ENCODE measurements at regions of chr6 and their contacts with region 1.

Region 1: DNA sequence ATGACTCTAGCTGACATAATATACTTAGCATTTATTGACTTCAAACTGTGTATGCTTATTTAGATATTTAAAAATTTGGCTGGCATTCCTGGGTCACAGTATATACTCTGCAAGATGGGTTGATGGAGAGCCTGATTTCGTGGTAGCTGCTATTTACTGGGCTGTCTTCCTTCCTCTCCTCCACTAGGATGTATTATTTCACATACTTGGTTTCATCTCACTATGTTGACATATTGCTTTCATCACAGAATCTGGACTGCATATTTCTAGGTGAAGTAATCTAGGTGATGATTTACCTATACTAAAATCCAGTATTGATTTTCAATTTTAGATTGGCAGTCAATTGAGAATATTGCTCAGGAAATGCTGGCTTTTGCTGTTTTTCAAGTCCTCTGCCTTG is 15.7 kb downstream of the AFDN start:
- DNase-seq: no peak
- CTCF ChIP-seq: no peak

Region 2: DNA sequence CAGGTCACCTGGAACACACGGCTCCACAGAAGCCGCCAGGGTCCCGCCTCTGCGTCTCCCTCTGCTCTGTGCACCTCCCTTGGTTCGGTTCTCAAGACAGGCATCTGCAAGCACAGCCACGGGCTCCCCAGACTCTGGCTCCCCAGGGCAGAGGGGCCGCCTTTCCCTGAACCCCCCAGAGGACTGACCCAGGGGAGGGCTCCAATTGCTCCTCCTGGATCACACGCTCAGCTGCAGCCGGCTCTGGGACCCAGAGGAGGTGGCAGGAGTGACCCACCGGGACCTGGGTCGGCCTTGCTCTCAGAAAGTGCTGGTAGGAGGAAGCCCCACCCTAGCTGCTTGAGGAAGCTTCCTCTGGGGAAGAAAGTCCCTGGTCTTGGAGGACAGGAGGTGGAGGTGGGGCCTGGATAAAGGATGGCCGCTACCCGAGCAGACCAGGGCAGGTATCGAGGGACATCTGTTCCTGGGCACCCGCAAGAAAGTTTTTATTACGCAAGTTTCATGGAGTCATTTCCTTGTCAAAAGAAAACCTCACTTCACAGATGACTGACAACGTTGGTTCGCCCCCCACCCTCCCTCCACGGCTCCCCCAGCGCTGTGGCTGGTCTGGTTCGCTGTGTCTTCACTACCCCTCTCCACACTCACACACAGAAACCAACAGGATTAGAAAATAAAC is 119.7 kb before region 1 on chr6:
- CTCF ChIA-PET with region 1: no interaction called
- POLR2A ChIA-PET with region 1: no interaction called
- DNase-seq: no peak
- CTCF ChIP-seq: no peak

Region 3: DNA sequence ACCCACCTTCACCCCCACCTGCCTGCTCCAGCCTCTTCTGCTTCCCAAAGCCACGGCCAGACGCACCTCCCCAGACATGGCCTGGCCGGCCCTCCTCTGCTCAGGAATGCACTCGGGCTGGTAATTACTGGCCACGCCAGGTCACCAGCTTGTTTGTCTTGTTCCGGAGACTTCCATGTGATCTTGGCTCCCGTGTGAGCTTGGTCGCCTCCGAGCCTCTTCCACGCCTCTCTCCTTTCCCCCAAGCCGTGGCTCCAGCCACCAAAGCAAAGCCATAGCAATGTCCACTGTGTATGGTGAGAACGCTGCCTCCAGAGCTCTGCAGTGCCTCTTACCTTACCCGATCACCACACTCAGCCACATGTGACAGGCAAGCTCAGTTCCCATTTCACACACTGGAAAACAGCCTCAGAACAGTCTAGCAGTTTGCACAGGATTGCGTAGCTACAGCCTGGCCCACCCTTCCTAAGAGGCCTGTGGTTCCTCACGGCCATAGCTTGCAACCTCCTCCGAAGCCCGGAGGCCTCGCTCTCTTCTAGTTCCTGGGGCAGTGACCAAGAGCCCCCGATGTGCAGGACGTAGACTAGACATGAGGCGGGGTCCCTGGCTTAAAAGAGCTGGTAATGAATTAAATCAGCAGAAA is 63.8 kb before region 1 on chr6:
- CTCF ChIA-PET with region 1: no interaction called
- POLR2A ChIA-PET with region 1: no interaction called
- DNase-seq: no peak
- CTCF ChIP-seq: no peak

Region 4: DNA sequence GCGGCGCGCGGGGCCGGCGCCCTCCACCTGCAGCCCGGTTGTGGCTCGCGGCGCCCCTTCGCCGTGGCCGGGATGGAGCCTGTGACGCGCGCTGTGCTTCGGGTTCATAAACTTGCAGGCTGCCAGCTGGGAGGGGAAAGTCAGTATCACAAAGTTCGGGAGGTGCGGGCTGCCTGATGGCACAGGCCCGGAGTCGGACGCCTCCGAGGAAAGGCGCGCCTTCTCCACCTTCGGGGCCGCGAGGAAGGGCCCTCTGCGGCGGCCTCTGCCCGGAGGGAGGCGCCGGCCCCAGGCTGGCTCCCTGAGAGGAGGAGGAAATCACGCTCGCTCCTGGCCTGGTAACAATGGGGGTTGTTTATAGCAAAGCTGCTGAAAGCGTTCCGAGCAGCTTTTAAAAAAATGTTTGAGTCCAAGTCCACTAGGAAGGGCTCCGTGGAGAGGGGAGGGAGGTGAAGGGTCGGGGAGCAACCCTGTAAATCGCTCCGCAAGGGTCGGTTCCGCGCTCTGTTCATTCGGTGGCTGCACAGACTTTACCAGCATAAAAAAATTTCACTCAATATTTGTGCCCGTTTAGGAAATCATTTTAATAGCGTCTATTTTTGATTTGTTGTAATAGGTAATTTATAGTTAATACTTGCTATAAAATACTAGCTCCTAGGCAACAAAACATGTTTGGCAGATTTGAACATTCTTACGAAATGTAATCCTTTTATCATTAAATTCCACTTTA is 14.7 kb before region 1 on chr6:
- CTCF ChIA-PET with region 1: interaction called, 11 read pairs
- POLR2A ChIA-PET with region 1: no interaction called
- DNase-seq: peak; percentile 45
- CTCF ChIP-seq: no peak

Region 5: DNA sequence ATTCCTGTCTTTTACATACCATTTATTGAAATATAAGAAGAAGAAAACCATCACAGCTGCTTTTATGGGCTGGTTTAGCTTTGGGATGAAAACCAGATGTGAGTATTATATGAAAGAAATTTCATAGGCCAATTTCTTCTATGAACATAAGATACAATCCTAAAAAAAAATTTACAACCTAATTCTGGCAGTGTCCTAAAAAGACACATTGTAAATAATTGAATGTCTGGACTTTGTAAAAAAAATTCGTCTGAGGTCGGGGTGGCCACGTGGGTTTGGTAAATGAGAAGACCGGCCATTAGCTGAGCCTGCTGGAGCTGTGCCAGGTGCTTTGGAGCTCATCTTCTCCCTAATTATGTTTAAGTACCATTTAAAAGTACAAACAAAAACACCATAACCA is 450.4 kb after region 1 on chr6:
- CTCF ChIA-PET with region 1: no interaction called
- POLR2A ChIA-PET with region 1: no interaction called
- DNase-seq: no peak
- CTCF ChIP-seq: no peak